ENCODE measurements at regions of chr5 and their contacts with region 1.

Region 1: GRCh38 chr5:1641560-1642166 is 117.9 kb upstream of the LPCAT1 start:
- DNase-seq: peak; percentile 36 to 75 (median 62)
- ATAC-seq: peak; percentile 93
- H3K4me3 ChIP-seq: no peak overlapping the region
- H3K4me3 Mint-ChIP-seq: peak overlapping the region in 3 of 10 donors; percentile 22 to 53 (median 26)
- H3K27ac ChIP-seq: no peak overlapping the region
- H3K27ac Mint-ChIP-seq: peak overlapping the region in 1 of 9 donors; percentile 31
- H3K4me1 ChIP-seq: peaks cover 3 to 12% of the 10 kb centered on the region in 2 donors
- H3K4me1 Mint-ChIP-seq: peaks cover 5 to 24% (median 15%) of the 10 kb centered on the region in 7 donors
- H3K27me3 ChIP-seq: peaks cover 7 to 13% of the 10 kb centered on the region in 2 donors
- H3K27me3 Mint-ChIP-seq: peaks cover 17 to 44% (median 21%) of the 10 kb centered on the region in 5 donors

Region 2: DNA sequence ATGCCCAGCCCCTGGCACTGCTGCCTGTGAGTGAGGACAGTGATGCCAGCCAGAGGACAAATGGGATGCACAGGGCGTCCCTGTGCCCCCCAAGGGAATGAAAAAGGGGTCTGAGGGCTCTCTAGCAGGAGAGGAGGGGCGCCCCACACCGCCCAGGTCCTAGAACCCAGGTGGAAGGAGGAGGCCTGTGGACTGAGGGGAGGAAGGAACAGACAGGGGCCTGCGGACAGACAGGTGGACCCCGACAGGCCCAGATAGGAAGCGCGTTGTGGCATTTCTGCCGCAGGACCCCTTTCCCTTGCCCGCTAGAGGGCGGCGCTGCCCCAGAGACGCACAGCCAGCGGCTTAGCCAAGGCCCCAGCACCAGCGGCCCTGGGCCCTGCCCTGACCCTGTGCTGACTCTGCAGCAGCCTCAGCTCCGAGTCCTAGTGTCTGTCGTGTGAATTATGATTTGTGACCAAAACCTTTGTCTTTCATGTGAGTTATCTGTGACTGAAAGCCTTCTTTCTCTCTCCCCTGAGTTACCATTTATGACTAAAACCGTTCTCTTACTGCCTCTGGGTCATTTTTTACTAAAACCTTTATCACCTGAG is 718.3 kb before region 1 on chr5:
- CTCF ChIA-PET with region 1: interaction called, 5 read pairs
- POLR2A ChIA-PET with region 1: no interaction called
- intact Hi-C with region 1: loop called (anchors 2 to 10 kb)
- DNase-seq: peak; percentile 41 to 79 (median 64)
- ATAC-seq: peak; percentile 87
- H3K4me3 ChIP-seq: no peak overlapping the region
- H3K4me3 Mint-ChIP-seq: no peak overlapping the region
- H3K27ac ChIP-seq: no peak overlapping the region
- H3K27ac Mint-ChIP-seq: no peak overlapping the region
- H3K4me1 ChIP-seq: no peaks in the 10 kb centered on the region
- H3K4me1 Mint-ChIP-seq: peaks cover 6 to 15% (median 11%) of the 10 kb centered on the region in 7 donors
- H3K27me3 ChIP-seq: no peaks in the 10 kb centered on the region
- H3K27me3 Mint-ChIP-seq: peaks cover 21 to 43% (median 33%) of the 10 kb centered on the region in 5 donors

Region 3: DNA sequence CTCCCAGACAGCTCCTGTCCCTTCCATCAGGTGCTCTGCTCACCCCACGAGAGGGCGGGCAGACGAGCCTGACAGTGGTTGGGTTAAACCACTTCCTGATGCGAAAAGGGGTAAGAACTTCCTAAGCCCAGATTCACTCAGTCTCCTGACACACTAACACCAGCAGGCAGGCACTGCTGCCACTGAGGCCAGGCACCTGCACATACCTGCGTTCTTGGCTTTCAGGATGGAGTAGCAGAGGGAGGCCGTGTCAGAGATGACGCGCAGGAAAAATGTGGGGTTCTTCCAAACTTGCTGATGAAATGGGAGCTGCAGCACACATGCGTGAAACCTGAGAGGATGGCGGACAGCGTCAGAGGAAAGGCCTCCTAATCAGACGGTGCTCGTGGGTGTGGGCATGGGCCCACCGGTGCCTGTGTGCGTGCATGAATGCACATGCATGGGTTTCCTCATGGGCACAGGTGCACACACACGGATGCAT is 386.5 kb before region 1 on chr5:
- CTCF ChIA-PET with region 1: no interaction called
- POLR2A ChIA-PET with region 1: no interaction called
- intact Hi-C with region 1: loop called in 1 of 2 experiments (anchors 1 kb)
- DNase-seq: peak; percentile 31 to 79 (median 71)
- ATAC-seq: peak; percentile 83
- H3K4me3 ChIP-seq: peak overlapping the region; percentile 48
- H3K4me3 Mint-ChIP-seq: peak overlapping the region; percentile 76 to 97 (median 90)
- H3K27ac ChIP-seq: peak overlapping the region; percentile 57
- H3K27ac Mint-ChIP-seq: peak overlapping the region; percentile 30 to 93 (median 89)
- H3K4me1 ChIP-seq: peaks cover 9 to 18% of the 10 kb centered on the region in 2 donors
- H3K4me1 Mint-ChIP-seq: peaks cover 7 to 23% (median 20%) of the 10 kb centered on the region in 7 donors
- H3K27me3 ChIP-seq: no peaks in the 10 kb centered on the region
- H3K27me3 Mint-ChIP-seq: no peaks in the 10 kb centered on the region

Region 4: DNA sequence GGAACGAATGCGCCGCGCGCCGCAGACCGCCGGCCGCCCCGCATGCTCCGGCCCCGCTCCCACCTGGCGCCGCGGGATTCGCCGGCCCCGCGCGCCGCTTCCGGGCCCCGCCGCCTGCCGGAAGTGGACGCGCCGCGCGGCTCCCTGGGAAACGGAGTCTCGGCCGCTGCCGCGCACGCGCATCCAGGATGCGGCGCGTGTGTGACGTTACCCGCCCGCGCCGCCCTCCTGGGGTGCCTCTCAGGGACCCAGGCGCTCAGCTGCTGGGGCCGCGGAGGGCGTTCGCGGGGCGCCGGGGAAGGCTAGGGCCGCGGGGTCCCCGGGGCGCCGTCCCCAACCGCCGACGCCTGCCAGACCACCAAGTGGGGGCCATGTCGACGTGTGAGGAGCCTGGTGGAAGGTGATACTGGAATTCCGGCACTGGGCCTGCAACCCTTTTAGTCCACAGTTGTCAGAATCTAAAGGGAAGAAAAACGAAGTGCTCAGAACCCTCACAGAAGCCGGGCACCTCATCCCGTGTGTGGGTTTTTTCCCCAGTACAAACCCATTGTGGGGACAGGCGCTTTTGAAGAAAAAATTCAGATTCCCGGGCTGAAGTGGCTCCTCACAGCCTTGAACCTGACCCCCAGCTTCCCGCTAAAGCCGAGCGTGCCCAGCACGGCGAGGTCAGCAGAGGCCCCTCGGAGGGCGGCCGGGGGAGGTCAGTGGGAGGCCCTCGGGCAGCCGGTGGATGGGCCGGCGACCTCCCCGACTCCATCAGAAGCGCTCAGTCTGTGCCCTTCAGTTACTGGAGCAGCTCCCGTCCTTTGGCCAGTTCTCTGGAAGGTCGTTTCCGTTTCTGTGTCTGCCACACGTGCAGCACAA is 296.5 kb before region 1 on chr5 and contains the start of gene CLPTM1L:
- CTCF ChIA-PET with region 1: no interaction called
- POLR2A ChIA-PET with region 1: no interaction called
- intact Hi-C with region 1: loop called in 1 of 2 experiments (anchors 1 kb)
- DNase-seq: peak; percentile 82 to 93 (median 90)
- ATAC-seq: peak; percentile 95
- H3K4me3 ChIP-seq: peak within 1 kb of the TSS; percentile 79
- H3K4me3 Mint-ChIP-seq: peak within 1 kb of the TSS; percentile 84 to 95 (median 91)
- H3K27ac ChIP-seq: peak within 1 kb of the TSS; percentile 97
- H3K27ac Mint-ChIP-seq: peak within 1 kb of the TSS; percentile 72 to 95 (median 88)
- H3K4me1 ChIP-seq: peaks cover 12 to 18% of the 10 kb centered on the region in 2 donors
- H3K4me1 Mint-ChIP-seq: peaks cover 21 to 44% (median 33%) of the 10 kb centered on the region in 7 donors
- H3K27me3 ChIP-seq: no peaks in the 10 kb centered on the region
- H3K27me3 Mint-ChIP-seq: no peaks in the 10 kb centered on the region
- total RNA-seq, gene CLPTM1L: 64.9 to 104 (median 71.9) TPM

Region 5: DNA sequence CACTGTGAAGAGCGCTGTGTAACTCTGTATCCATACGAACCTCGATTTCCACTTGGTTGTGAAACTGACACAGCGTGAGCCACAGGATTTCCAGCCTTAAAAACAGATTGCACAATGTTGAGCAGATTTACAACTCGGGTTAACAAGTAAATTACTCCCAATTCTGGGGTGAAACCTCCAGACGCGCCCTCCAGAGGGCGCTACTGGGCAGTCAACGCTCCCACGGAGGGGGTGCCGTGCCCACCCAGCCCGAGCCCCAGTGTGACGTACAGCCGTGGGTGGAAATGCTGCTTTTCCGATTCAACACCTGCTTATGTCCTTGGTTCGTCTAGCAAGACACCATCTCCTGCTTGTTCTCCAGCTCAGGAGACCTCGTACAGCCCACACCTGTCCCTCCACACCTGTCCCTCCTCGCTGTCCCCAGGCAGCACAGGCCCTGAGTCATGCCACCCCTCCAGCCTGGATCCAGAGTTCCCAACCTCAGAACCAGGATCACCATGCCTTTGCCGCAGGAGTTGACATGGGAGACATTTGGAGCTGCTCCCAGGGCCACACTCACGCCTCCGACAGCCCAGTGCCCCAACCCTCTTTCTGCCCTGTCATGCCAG is 162.0 kb before region 1 on chr5:
- CTCF ChIA-PET with region 1: interaction called, 18 read pairs
- POLR2A ChIA-PET with region 1: no interaction called
- intact Hi-C with region 1: loop called (anchors 1 kb)
- DNase-seq: peak in 8 of 9 donors; percentile 29 to 49 (median 39)
- ATAC-seq: peak; percentile 56
- H3K4me3 ChIP-seq: no peak overlapping the region
- H3K4me3 Mint-ChIP-seq: no peak overlapping the region
- H3K27ac ChIP-seq: no peak overlapping the region
- H3K27ac Mint-ChIP-seq: peak overlapping the region in 1 of 9 donors; percentile 9
- H3K4me1 ChIP-seq: no peaks in the 10 kb centered on the region
- H3K4me1 Mint-ChIP-seq: peaks cover 0 to 15% (median 5%) of the 10 kb centered on the region in 7 donors
- H3K27me3 ChIP-seq: no peaks in the 10 kb centered on the region
- H3K27me3 Mint-ChIP-seq: no peaks in the 10 kb centered on the region

Region 6: GRCh38 chr5:1523771-1524480 is 117.7 kb before region 1 on chr5 and contains the start of gene LPCAT1:
- CTCF ChIA-PET with region 1: no interaction called
- POLR2A ChIA-PET with region 1: no interaction called
- intact Hi-C with region 1: loop called (anchors 2 kb)
- DNase-seq: peak; percentile 44 to 91 (median 71)
- ATAC-seq: peak; percentile 93
- H3K4me3 ChIP-seq: peak within 1 kb of the TSS; percentile 61
- H3K4me3 Mint-ChIP-seq: peak within 1 kb of the TSS; percentile 73 to 89 (median 83)
- H3K27ac ChIP-seq: peak within 1 kb of the TSS; percentile 81
- H3K27ac Mint-ChIP-seq: peak within 1 kb of the TSS in 6 of 9 donors; percentile 33 to 77 (median 69)
- H3K4me1 ChIP-seq: peaks cover 13 to 31% of the 10 kb centered on the region in 2 donors
- H3K4me1 Mint-ChIP-seq: peaks cover 13 to 30% (median 19%) of the 10 kb centered on the region in 7 donors
- H3K27me3 ChIP-seq: no peaks in the 10 kb centered on the region
- H3K27me3 Mint-ChIP-seq: peaks cover 0 to 8% (median 0%) of the 10 kb centered on the region in 5 donors
- total RNA-seq, gene LPCAT1: 29.4 to 89.4 (median 49.7) TPM

Measured in naive thymus-derived CD4-positive, alpha-beta T cell (primary cell).